Panc1 (cell line): ENCODE measurements at regions of chr4 and their contacts with region 1.

Region 1: DNA sequence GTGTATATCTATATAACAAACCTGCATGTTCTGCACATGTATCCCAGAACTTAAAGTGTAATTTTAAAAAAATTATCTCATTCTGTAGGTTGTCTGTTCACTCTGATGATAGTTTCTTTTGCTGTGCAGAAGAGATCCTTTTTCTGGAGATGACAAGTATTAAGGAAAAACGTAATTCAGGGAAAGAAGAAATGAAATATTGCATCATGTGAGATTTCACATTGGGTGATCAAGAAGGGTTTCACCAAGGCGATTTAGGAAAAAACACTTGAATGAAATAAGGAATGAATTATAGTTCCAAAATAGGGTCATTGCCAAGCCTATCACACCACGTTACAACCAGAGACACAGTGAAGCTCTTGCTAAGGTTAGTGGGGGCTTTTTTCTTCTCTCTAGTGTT is 227.9 kb downstream of the HNRNPD start:
- DNase-seq: no peak
- ATAC-seq: no peak
- H3K4me3 ChIP-seq: no peak overlapping the region
- H3K27ac ChIP-seq: no peak overlapping the region
- H3K4me1 ChIP-seq: no peaks in the 10 kb centered on the region
- H3K27me3 ChIP-seq: no peaks in the 10 kb centered on the region
- CTCF ChIP-seq: no peak

Region 2: GRCh38 chr4:82213485-82214417 is 67.9 kb after region 1 on chr4:
- CTCF ChIA-PET with region 1: no interaction called
- POLR2A ChIA-PET with region 1: interaction called, 12 read pairs
- in situ Hi-C with region 1: no loop called
- intact Hi-C with region 1: no loop called
- DNase-seq: no peak
- ATAC-seq: no peak
- H3K4me3 ChIP-seq: no peak overlapping the region
- H3K27ac ChIP-seq: no peak overlapping the region
- H3K4me1 ChIP-seq: no peaks in the 10 kb centered on the region
- H3K27me3 ChIP-seq: no peaks in the 10 kb centered on the region
- CTCF ChIP-seq: no peak